Right lobe of liver (tissue), 6 donors: ENCODE measurements at regions of chr14 and their contacts with region 1.

Region 1: DNA sequence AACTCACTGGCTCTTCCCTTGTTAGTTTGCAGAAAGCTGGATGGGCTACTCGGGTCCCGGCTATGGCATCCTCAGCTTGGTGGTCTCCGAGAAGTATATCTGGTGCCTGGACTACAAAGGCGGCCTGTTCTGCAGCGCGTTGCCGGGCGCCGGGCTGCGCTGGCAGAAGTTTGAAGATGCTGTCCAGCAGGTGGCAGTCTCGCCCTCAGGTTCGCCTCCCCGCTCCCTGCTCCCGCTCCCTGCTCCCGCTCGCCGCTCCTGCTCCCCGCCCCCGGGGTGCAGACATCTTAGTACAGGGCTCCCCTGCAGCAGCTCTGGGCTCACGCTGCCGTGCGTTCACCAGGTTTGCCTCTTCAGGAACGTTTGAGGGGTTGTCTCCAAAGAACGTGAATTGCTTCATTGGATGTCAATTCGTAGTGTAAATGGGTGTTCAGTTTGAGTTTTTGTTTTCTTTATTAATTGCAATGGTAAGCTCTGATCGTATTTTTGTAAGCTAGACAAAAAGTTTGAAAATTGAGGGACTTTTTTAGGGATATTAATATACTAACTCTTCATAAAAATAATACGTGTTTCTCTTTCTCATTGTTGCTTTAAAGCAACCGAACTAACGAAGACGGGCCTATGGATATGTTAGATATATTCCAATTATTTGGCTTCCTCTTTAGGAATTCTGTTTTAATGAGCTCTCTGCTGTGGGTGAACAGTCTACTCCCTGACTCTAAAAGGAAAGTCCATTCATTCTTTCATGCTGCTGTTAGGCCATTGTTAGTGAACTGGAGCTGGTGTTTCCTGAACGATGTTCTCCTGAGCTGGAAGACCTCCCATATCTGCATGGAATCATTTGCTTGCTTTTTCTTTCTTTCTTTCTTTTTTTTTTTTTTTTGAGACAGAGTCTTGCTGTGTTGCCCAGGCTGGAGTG is 71.3 kb downstream of the ANKRD9 start:
- DNase-seq: peak; percentile 85 to 87 (median 86)
- ATAC-seq: peak; percentile 96 to 99 (median 98)
- H3K4me3 ChIP-seq: peak overlapping the region in 1 of 3 donors; percentile 28
- H3K27ac ChIP-seq: no peak overlapping the region
- H3K4me1 ChIP-seq: no peaks in the 10 kb centered on the region
- H3K27me3 ChIP-seq: no peaks in the 10 kb centered on the region
- CTCF ChIP-seq: peak; percentile 71 to 87 (median 81)
- POLR2A ChIP-seq: no peak

Region 2: DNA sequence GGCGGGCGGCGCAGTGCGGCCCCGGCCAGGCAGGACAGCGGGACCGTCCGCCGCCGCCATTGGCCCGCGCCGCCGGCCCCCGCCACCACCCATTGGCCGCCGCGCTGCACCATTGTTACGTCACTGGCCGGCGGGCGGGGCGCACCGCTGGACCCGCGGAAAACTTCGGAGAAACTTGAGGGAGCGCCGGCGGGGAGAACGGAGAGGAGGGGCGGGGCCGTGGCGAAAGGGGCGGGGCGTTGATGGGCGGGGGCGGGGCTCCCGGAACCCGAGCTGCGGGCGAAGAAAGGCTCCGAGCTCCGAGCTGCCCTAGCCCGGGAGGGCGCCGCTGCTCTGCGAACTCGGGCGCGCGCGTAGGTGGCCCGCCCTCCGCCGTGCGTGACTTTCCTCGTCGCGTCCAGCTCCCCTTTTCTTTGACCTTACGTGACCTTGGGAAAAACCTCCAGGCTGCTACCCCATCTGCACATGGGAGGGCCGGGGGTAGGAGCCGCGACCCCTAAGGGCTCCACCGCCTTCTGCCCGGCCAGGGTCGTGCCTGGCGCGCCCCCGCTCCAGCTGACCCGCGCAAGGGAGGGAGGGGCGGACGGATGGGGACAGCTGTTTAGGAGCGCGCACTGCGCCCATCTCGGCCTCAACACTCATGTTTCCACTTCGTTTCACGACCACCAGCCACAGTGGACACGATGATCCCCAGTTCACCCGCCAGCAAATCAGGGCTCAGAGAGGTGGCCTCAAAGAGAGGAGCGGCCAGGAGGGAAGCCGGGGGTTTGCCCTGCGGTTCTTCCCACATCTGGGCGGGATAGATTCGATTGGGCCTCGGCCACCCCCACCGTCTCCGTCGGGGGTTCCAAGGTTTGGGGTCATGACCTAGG is 71.7 kb after region 1 on chr14 and contains the start of gene ANKRD9:
- intact Hi-C with region 1: loop called (anchors 5 kb)
- DNase-seq: peak; percentile 96
- ATAC-seq: peak; percentile 88 to 93 (median 90)
- H3K4me3 ChIP-seq: peak within 1 kb of the TSS; percentile 41 to 63 (median 58)
- H3K27ac ChIP-seq: peak within 1 kb of the TSS; percentile 26 to 85 (median 76)
- H3K4me1 ChIP-seq: peaks cover 0 to 6% (median 0%) of the 10 kb centered on the region in 4 donors
- H3K27me3 ChIP-seq: no peaks in the 10 kb centered on the region
- CTCF ChIP-seq: no peak
- POLR2A ChIP-seq: no peak
- total RNA-seq, gene ANKRD9: 7.5 to 33.8 (median 8.9) TPM

Region 3: DNA sequence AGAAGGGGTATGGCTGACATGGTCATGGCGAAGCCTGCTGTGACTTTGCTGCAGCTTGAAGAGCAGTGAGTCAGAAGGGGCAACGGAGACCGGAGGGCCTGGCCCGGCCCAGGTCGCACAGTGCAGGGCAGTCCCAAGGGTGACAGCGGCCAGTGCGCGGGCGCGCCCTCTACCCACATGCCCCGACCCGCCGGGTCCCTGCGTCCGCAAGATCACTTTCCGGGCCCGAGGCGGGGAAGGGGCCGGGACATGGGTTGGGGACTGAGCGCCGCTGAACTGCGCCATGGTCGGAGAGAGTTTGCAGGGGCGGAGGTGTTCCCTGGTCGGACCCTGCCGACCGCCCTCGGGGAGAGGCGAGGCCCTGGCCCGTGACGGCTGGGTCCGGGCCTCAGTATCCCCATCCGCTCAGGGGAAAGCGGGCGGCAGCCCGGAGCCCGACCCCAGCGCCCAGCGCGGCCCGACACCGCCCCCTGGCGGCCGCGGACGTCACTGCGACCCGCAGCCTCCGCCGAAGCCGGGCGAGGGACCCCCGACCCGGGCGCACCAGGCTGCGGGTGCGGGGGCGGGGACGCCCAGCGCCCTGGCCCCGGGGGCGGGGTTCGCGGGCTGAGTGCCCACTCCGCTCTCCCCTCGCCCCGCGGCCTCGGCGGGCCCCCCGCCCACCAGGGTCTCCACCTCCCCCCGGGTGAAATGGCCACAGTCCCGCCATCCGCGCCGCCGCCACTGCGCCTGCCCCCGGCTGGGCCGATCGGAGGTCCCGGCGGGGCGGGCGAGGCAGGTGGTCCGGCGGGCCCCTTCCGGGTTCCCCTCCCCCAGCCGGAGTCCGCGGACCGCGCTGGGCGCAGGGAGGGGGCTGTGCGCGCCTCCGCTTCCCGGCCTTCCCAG is 78.5 kb after region 1 on chr14:
- intact Hi-C with region 1: loop called (anchors 5 kb)
- DNase-seq: peak; percentile 56 to 70 (median 69)
- ATAC-seq: peak; percentile 81 to 94 (median 86)
- H3K4me3 ChIP-seq: peak overlapping the region; percentile 54 to 68 (median 61)
- H3K27ac ChIP-seq: peak overlapping the region in 2 of 3 donors; percentile 36 to 57
- H3K4me1 ChIP-seq: peaks cover 0 to 5% (median 0%) of the 10 kb centered on the region in 4 donors
- H3K27me3 ChIP-seq: no peaks in the 10 kb centered on the region
- CTCF ChIP-seq: peak; percentile 79 to 100 (median 92)
- POLR2A ChIP-seq: no peak

Region 4: GRCh38 chr14:102568114-102568621 is 129.9 kb after region 1 on chr14:
- intact Hi-C with region 1: no loop called
- DNase-seq: no peak
- ATAC-seq: peak; percentile 59 to 76 (median 64)
- H3K4me3 ChIP-seq: no peak overlapping the region
- H3K27ac ChIP-seq: no peak overlapping the region
- H3K4me1 ChIP-seq: no peaks in the 10 kb centered on the region
- H3K27me3 ChIP-seq: no peaks in the 10 kb centered on the region
- CTCF ChIP-seq: no peak
- POLR2A ChIP-seq: no peak